ENCODE measurements at regions of chr2 and their contacts with region 1.

Region 1: GRCh38 chr2:35293261-35293660 is 1062.3 kb upstream of the CRIM1 start:
- DNase-seq: no peak
- H3K4me3 ChIP-seq: no peak overlapping the region
- H3K27ac ChIP-seq: no peak overlapping the region
- H3K4me1 ChIP-seq: no peaks in the 10 kb centered on the region
- H3K27me3 ChIP-seq: no peaks in the 10 kb centered on the region
- CTCF ChIP-seq: no peak
- EP300 ChIP-seq: no peak
- POLR2A ChIP-seq: no peak

Region 2: GRCh38 chr2:35251156-35251555 is 42.1 kb before region 1 on chr2:
- in situ Hi-C with region 1: no loop called
- intact Hi-C with region 1: loop called (anchors 1 kb)
- DNase-seq: no peak
- H3K4me3 ChIP-seq: no peak overlapping the region
- H3K27ac ChIP-seq: no peak overlapping the region
- H3K4me1 ChIP-seq: no peaks in the 10 kb centered on the region
- H3K27me3 ChIP-seq: no peaks in the 10 kb centered on the region
- CTCF ChIP-seq: no peak
- EP300 ChIP-seq: no peak
- POLR2A ChIP-seq: no peak

Region 3: GRCh38 chr2:36973320-36973719 is 1680.1 kb after region 1 on chr2:
- in situ Hi-C with region 1: no loop called
- intact Hi-C with region 1: no loop called
- DNase-seq: no peak
- H3K4me3 ChIP-seq: no peak overlapping the region
- H3K27ac ChIP-seq: no peak overlapping the region
- H3K4me1 ChIP-seq: peaks cover 0 to 9% (median 0%) of the 10 kb centered on the region in 4 donors
- H3K27me3 ChIP-seq: no peaks in the 10 kb centered on the region
- CTCF ChIP-seq: no peak
- EP300 ChIP-seq: no peak
- POLR2A ChIP-seq: no peak

Region 4: DNA sequence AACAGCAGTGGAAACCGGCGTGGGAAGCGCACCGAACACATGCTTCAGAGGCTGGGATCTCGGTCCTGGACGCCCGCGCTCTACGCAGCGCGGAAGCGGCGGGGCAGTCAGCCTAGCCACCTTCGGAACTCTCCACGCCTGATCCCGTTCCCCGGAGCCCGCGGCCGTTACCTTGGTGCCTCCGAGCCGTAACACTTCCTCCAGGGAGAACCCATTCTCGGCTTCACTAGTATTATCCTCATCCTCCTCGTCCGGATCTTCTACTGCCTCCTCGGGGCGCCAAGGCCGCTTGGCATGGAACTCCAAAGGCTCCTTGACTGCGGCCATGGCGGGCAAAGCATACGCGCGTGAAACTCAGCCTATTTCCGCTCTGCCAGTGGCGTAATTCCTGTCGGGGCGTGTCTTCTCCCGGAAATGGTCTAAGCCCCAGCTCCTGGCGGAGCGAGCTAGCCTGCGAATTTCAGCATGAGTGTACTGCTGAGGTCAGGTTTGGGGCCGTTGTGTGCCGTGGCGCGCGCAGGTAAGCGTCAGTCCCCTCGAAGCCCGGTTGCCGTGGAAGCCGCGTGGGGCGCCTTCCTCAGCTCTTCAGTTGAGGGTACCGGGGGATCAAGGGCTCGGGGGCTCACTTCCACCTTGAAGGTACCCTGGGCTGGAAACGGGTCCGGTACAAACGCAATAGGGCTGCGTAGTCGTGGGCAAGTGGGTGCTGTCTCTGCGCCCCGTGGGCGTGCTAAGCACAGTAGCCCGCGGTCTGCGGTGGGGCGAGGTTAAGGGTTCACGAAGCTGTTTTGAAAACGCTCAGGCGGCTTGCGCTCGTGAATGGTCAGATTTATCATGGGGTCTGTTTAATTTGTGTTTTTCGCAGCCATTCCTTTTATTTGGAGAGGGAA is 1938.2 kb after region 1 on chr2 and contains the starts of genes CEBPZ and NDUFAF7:
- in situ Hi-C with region 1: no loop called
- intact Hi-C with region 1: no loop called
- DNase-seq: peak; percentile 94
- H3K4me3 ChIP-seq: peak within 1 kb of the TSS; percentile 76 to 80 (median 78)
- H3K27ac ChIP-seq: peak within 1 kb of the TSS; percentile 93 to 94 (median 94)
- H3K4me1 ChIP-seq: peaks cover 0 to 34% (median 24%) of the 10 kb centered on the region in 4 donors
- H3K27me3 ChIP-seq: no peaks in the 10 kb centered on the region
- CTCF ChIP-seq: peak in 1 of 5 experiments; percentile 27
- EP300 ChIP-seq: no peak
- POLR2A ChIP-seq: peak; percentile 91
- total RNA-seq, gene CEBPZ: 9.4 to 235 (median 33.7) TPM
- total RNA-seq, gene NDUFAF7: 1.9 to 21.6 (median 16.5) TPM

Measured in transverse colon (tissue), 4 donors.